ENCODE measurements at regions of chr13 and their contacts with region 1.

Region 1: DNA sequence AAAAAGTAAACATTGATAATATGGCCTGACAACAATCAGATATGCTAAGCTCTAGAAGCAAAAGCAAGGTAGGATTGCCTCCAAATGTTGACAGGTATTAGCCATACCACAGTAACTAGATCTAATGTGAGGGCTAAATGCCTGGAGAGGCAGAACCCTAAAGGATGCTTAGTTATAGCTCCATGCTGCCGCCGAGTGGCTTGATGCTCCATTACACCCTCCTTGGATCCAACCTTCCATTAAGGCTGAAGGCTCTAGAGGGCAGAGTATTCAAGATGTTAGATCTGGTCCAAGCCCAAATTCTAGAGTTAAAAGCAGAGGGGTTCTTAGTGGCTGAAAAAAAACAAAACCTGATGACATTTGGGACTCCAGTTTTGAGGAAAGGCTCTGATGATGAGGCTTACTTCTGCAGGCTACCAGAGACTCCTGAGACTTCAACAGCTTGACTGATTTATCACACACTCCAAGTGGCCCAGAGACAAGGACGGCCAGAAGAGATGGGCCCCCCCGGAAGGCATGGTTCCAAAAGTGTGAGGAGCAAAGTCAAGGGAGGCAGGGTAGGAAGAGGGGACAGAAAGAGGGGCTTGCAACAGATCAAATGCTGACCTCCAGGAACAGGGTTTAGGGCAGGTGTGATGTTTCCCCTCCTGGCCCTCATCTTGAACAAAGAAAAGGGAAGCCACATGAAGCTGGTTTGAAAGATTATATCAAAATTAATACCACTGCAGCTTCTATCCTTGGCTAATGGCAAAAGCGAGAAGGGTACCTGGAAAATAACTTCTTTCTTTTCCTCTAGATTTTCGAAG is 21.9 kb upstream of the CPB2 start:
- DNase-seq: peak; percentile 34 to 92 (median 84)
- H3K4me3 ChIP-seq: no peak overlapping the region
- H3K27ac ChIP-seq: peak overlapping the region in 28 of 59 donors; percentile 4 to 93 (median 52)
- H3K27me3 ChIP-seq: peaks cover 0 to 8% (median 0%) of the 10 kb centered on the region in 45 donors
- CTCF ChIP-seq: peak; percentile 47 to 96 (median 86)

Region 2: GRCh38 chr13:45807520-45808099 is 319.1 kb before region 1 on chr13:
- intact Hi-C with region 1: loop called (anchors 2 to 5 kb)
- DNase-seq: peak in 3 of 10 donors; percentile 21 to 60 (median 57)
- H3K4me3 ChIP-seq: no peak overlapping the region
- H3K27ac ChIP-seq: no peak overlapping the region
- H3K27me3 ChIP-seq: no peaks in the 10 kb centered on the region
- CTCF ChIP-seq: peak; percentile 17 to 83 (median 66)

Region 3: GRCh38 chr13:45879670-45880069 is 247.1 kb before region 1 on chr13:
- intact Hi-C with region 1: loop called in 1 of 2 experiments (anchors 10 kb)
- DNase-seq: peak in 1 of 10 donors; percentile 65
- H3K4me3 ChIP-seq: peak overlapping the region in 3 of 59 donors; percentile 8 to 46 (median 17)
- H3K27ac ChIP-seq: peak overlapping the region in 21 of 59 donors; percentile 5 to 79 (median 41)
- H3K27me3 ChIP-seq: peaks cover 0 to 7% (median 0%) of the 10 kb centered on the region in 45 donors
- CTCF ChIP-seq: peak in 4 of 56 donors; percentile 11 to 23 (median 19)

Region 4: DNA sequence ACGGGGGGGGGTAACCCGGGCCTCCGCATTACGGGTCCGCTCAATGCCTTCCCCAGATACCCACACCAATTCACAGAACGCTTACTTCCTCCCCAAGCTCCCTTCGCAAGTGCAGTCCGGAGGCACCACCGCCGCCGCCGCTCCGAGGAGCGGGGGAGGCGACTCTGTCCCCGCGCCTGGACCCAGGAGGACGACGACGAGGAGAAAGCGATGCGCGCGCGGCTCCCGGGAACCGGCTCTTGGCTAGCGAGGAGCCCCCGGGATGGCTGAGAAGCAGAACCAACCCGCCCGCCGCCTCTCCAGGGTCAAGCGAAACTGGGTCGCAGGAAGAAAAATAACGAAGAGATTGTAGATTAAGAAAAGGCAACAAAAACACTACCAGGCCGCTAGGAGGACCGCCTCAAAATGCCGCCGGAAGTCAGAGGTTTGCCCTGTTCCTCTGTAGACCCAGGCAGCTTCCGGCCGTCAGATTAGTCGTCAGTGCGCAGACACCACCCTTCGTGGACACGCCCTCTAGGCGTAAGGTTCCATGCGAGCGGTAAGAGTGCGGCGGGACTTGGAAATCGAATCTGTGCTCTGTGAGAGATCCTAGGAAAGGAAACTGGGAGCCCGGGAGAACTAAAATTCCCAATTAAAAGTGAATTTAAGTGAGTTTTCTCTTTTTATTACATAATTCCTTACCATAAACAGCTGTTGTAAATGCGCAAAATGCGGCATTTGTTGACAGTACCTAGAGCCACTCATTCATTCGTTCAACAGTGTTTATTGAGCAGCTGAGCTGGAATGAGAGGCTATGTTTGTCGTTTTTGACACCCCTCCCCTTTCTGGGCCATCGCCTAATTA is 74.2 kb before region 1 on chr13 and contains the start of gene ZC3H13:
- intact Hi-C with region 1: loop called (anchors 2 to 5 kb)
- DNase-seq: peak; percentile 94 to 98 (median 96)
- H3K4me3 ChIP-seq: peak within 1 kb of the TSS; percentile 62 to 99 (median 90)
- H3K27ac ChIP-seq: peak within 1 kb of the TSS; percentile 29 to 97 (median 92)
- H3K27me3 ChIP-seq: no peaks in the 10 kb centered on the region
- CTCF ChIP-seq: peak; percentile 25 to 81 (median 64)
- total RNA-seq, gene ZC3H13: 64.3 to 130 (median 93.6) TPM

Region 5: DNA sequence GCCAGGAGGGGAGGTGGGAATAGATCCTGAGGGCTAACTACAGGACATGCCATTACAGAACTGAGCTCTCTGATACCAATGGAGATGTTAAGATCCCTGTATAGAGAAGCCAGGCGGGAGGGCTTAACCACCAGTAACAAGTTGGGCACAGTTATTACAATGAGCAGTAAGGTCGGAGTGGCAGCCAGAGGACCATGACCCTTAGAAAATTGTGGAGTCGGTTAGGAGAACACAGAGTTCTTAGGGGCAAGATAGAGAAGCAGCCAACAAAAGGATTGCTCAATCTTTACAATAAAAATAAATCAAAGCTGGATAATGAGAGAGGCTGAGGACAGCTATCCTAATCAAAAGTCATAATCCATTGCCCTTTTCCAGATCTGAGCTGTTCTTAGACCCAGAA is 32.3 kb before region 1 on chr13:
- intact Hi-C with region 1: loop called in 1 of 2 experiments (anchors 2 kb)
- DNase-seq: no peak
- H3K4me3 ChIP-seq: no peak overlapping the region
- H3K27ac ChIP-seq: peak overlapping the region in 14 of 59 donors; percentile 3 to 94 (median 44)
- H3K27me3 ChIP-seq: no peaks in the 10 kb centered on the region
- CTCF ChIP-seq: no peak

Region 6: DNA sequence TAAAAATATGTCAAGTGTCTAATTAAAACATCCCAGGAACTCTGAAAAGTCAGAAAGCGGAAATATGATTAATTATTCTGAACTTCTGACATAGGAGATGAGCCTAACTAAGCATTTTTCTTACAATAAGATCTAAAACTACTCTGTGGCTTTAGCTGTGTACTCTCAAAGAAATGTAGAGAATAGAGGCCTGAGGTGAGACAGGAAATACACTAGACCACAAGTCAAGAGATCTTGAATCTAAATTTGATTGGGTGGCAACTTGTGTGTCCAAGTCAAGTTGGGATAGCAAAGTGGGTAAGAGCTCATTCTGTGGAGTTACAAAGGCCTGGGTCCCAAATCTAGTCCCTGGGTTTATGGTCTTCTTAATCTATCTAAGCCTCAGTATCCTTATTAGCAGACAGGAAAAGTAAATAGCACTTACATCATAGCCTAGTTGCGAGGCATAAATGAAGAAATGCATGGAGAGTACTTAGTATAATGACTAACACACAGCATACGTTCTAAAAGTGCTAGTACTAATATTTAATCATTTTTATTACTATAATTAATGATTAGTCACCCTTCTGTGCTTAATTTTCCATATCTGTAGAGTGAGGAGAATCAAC is 75.5 kb after region 1 on chr13:
- intact Hi-C with region 1: no loop called
- DNase-seq: no peak
- H3K4me3 ChIP-seq: no peak overlapping the region
- H3K27ac ChIP-seq: no peak overlapping the region
- H3K27me3 ChIP-seq: no peaks in the 10 kb centered on the region
- CTCF ChIP-seq: no peak

Region 7: DNA sequence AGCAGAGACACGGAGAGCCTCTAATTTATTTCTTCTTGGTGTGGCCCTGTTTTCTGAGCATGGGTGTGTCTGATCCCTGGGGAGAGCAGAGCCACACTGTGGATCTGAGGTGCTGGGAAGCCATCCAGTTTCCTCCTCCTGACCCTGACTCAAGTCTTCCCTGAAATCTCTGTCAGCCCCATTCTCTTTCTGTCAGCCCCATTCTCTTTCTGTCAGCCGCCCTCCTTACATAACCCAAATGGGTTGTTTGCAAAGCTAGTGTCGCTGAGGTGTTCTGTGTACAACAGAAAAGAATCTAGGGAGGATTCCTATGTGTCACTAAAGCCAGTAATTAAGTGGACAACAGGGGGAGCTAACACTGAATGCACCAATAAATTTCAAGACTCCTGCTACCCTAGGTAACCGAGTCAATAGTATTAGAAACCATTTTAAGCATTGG is 476.4 kb after region 1 on chr13:
- intact Hi-C with region 1: no loop called
- DNase-seq: no peak
- H3K4me3 ChIP-seq: no peak overlapping the region
- H3K27ac ChIP-seq: no peak overlapping the region
- H3K27me3 ChIP-seq: no peaks in the 10 kb centered on the region
- CTCF ChIP-seq: peak in 7 of 56 donors; percentile 10 to 21 (median 17)

Measured in dorsolateral prefrontal cortex (tissue), 120 donors.